HepG2 (cell line): ENCODE measurements at regions of chr1 and their contacts with region 1.

Region 1: GRCh38 chr1:185627171-185627570 is 107.0 kb upstream of the HMCN1 start:
- DNase-seq: no peak
- ATAC-seq: no peak; the same call in 2 of the 3 replicates
- H3K4me3 ChIP-seq: no peak overlapping the region
- H3K27ac ChIP-seq: no peak overlapping the region
- H3K4me1 ChIP-seq: 0 out of 2 replicates have a peak, but pooled peaks cover 6% of the 10 kb centered on the region
- H3K27me3 ChIP-seq: no peaks in the 10 kb centered on the region
- CTCF ChIP-seq: no peak
- EP300 ChIP-seq: no peak
- POLR2A ChIP-seq: no peak
- RAD21 ChIP-seq: no peak

Region 2: DNA sequence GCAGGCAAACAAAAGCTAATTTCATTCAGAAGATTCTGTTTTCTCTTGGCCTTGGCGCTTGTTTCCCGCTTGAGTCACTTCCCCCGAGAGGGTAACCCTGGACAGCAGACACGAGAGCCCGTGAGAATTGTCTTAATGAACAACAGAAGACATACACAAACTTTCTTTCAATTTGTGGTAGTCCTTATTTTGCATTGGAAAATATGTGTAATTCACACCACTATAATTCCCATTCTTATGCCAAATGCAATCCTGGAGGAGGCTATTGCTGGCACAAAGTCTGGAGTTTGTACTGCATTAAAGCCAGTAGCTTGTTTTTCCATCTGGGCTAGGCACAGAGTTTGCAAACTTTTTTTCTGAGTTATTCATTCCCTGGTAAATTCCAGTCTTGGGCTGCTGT is 200.3 kb before region 1 on chr1:
- CTCF ChIA-PET with region 1: no interaction called
- POLR2A ChIA-PET with region 1: no interaction called
- in situ Hi-C with region 1: no loop called
- intact Hi-C with region 1: no loop called
- DNase-seq: no peak
- ATAC-seq: no peak
- H3K4me3 ChIP-seq: no peak overlapping the region
- H3K27ac ChIP-seq: no peak overlapping the region
- H3K4me1 ChIP-seq: no peaks in the 10 kb centered on the region
- H3K27me3 ChIP-seq: 0 out of 5 replicates have a peak, but pooled peaks cover 1 to 6% of the 10 kb centered on the region in 2 experiments
- CTCF ChIP-seq: no peak
- EP300 ChIP-seq: no peak
- POLR2A ChIP-seq: no peak
- RAD21 ChIP-seq: no peak

Region 3: DNA sequence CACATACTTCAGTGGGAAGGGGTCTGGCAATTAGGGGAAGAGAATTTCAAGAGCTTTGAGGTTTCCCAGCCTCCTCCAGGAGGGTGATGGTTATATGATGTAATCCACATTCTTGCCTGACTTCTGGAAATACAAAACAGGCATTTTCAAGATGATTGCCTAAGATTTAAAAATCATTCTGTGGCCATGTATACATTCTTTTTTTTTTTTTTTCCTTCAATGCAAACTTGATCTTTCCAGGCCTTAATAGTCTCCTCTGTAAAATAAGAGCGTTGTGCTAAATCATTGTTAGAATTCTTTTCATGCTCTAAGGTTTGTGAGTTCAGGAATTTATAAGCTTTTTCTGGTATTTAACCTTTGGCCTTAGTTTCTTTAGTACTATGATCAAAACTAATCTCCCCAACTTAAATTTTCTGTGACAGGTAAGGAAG is 85.3 kb before region 1 on chr1:
- CTCF ChIA-PET with region 1: no interaction called
- POLR2A ChIA-PET with region 1: no interaction called
- in situ Hi-C with region 1: no loop called
- intact Hi-C with region 1: no loop called
- DNase-seq: no peak
- ATAC-seq: no peak
- H3K4me3 ChIP-seq: no peak overlapping the region
- H3K27ac ChIP-seq: no peak overlapping the region
- H3K4me1 ChIP-seq: no peaks in the 10 kb centered on the region
- H3K27me3 ChIP-seq: no peaks in the 10 kb centered on the region
- CTCF ChIP-seq: no peak
- EP300 ChIP-seq: no peak
- POLR2A ChIP-seq: no peak
- RAD21 ChIP-seq: no peak

Region 4: GRCh38 chr1:185652348-185652747 is 25.2 kb after region 1 on chr1:
- CTCF ChIA-PET with region 1: no interaction called
- POLR2A ChIA-PET with region 1: no interaction called
- in situ Hi-C with region 1: no loop called
- intact Hi-C with region 1: loop called (anchors 1 kb)
- DNase-seq: peak; percentile 20
- ATAC-seq: no peak
- H3K4me3 ChIP-seq: no peak overlapping the region
- H3K27ac ChIP-seq: no peak overlapping the region
- H3K4me1 ChIP-seq: peaks cover 26% of the 10 kb centered on the region
- H3K27me3 ChIP-seq: no peaks in the 10 kb centered on the region
- CTCF ChIP-seq: peak; percentile 42
- EP300 ChIP-seq: no peak
- POLR2A ChIP-seq: no peak
- RAD21 ChIP-seq: no peak